ENCODE measurements at regions of chr2 and their contacts with region 1.

Region 1: DNA sequence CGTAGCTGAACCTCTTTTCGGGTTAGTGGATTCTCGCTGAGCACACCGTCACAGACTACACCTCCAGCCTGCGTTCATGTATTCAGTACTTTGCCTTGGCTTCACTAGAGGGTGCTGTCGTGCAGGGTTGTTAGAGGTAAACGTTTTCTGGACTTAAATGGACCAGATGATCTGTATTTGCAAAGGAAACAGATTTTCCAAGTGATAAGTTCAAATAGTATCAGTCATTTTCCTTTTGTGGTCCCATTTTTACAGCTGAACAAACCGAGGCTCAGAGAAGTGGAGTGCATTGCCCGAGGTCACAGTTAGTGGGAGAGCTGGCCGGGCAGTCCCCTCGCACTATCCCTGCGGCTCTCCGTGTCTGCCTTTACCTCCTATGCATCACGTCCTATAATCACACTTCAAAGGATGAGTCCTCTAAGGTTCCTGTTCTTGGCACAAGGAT is 125.9 kb downstream of the MAP4K4 start:
- DNase-seq: peak in 1 of 2 donors; percentile 76
- ATAC-seq: peak; percentile 27 to 76 (median 61)
- H3K4me3 ChIP-seq: no peak overlapping the region
- H3K27ac ChIP-seq: no peak overlapping the region
- H3K4me1 ChIP-seq: peaks cover 19 to 89% (median 71%) of the 10 kb centered on the region in 9 donors
- H3K27me3 ChIP-seq: no peaks in the 10 kb centered on the region
- CTCF ChIP-seq: peak; percentile 33 to 77 (median 71)

Region 2: DNA sequence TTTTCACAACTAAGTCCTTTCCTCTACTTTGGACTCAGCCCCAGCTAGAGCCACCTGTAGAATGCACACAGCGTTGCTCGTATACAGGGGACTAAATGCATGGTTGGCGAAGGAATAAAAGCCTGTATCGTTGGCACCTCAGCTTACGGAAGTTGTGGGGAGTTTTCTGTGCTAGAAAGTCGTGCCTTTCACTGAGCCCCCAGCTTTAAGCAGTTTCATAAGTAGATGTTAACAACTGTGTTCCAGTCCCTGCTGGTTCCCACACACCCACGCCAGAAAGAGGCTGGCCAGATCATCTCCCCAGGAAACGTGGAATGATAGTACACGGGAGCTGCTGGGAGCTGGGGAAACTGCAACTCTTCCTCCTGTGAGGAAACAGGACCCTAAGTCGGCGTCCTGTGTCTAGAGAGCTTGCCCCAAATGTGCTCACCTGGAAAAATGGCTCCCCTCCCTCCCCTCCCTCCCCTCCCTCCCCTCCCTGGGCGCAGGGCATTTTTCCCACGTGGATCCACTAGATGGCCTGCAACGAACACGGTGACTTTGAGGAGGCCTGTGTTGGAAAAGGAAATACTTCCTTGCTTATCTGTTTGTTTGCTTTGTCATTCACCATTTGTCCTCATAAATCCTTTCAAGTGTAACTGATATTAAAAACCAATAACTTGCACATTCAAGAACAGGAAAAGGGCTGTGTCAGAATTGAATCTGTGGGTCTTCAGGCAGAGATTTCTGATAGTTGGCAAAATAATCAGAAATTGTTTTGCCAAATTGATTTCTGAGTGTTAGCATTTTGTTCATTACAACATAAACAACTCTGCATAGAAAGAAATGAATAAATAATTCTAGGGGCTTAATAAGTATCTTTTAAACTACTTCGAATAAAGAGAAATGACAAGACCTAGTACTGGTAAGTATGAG is 304.5 kb before region 1 on chr2:
- intact Hi-C with region 1: loop called in 2 of 10 experiments (anchors 2 to 5 kb)
- DNase-seq: peak; percentile 39 to 66
- ATAC-seq: peak; percentile 68 to 83 (median 79)
- H3K4me3 ChIP-seq: peak overlapping the region in 2 of 10 donors; percentile 21 to 24
- H3K27ac ChIP-seq: peak overlapping the region in 6 of 10 donors; percentile 5 to 64 (median 30)
- H3K4me1 ChIP-seq: peaks cover 0 to 55% (median 30%) of the 10 kb centered on the region in 9 donors
- H3K27me3 ChIP-seq: peaks cover 0 to 22% (median 0%) of the 10 kb centered on the region in 7 donors
- CTCF ChIP-seq: peak in 8 of 9 donors; percentile 22 to 71 (median 50)

Region 3: DNA sequence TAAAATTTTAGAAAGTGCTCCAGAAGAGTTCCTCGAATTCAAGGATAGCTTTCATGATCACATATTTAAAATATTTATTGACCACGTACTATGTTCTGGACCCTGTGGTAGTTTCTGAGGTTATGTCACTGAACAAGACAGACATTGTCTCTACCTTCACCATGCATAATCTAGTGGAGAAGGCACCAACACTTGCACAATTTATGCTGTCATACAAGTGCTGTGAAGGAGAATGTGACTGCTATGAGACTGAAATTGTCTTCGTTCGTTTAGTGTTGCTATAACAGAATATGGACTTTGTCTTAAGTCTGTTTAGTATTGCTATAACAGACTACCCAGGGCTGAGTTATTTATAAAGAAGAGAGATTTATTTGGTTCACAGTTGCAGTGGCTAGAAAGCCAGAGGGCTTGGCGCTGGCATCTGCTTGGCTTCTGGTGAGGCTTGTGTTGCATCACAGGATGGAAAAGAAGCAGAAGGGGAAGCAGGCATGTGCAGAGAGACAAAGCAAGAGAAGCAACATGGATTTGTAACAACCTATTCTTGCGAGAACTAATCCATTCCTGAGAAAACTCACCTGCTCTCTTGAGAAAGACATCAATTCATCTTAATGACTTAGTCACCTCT is 298.5 kb before region 1 on chr2:
- intact Hi-C with region 1: loop called in 1 of 10 experiments (anchors 5 kb)
- DNase-seq: peak in 1 of 2 donors; percentile 23
- ATAC-seq: peak in 6 of 8 donors; percentile 46 to 90 (median 66)
- H3K4me3 ChIP-seq: no peak overlapping the region
- H3K27ac ChIP-seq: peak overlapping the region in 1 of 10 donors; percentile 29
- H3K4me1 ChIP-seq: peaks cover 0 to 13% (median 7%) of the 10 kb centered on the region in 9 donors
- H3K27me3 ChIP-seq: peaks cover 0 to 38% (median 0%) of the 10 kb centered on the region in 7 donors
- CTCF ChIP-seq: peak in 1 of 9 donors; percentile 8

Region 4: GRCh38 chr2:101759162-101759561 is 64.2 kb before region 1 on chr2:
- intact Hi-C with region 1: loop called in 2 of 10 experiments (anchors 2 to 10 kb)
- DNase-seq: peak in 1 of 2 donors; percentile 54
- ATAC-seq: peak in 7 of 8 donors; percentile 30 to 71 (median 53)
- H3K4me3 ChIP-seq: no peak overlapping the region
- H3K27ac ChIP-seq: peak overlapping the region in 5 of 10 donors; percentile 27 to 65 (median 49)
- H3K4me1 ChIP-seq: peaks cover 27 to 83% (median 75%) of the 10 kb centered on the region in 9 donors
- H3K27me3 ChIP-seq: no peaks in the 10 kb centered on the region
- CTCF ChIP-seq: no peak

Region 5: DNA sequence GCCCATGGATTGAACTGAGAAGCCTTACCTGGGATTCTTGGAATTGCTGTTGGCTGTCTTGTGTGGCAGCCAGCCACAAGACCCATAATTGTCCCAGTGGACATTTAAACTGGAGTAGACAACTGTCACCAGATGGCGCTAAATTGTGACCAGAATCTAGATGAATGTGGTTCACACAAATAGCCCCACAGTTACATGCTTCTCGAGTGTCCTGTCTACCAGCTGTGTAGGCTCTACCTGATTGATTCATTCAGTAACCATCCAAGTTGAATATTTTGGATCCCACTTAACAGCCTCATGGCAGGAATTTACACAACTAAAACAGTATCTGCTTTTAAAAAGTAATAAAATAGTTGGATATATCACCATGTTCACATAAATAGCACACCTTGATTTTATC is 52.6 kb before region 1 on chr2:
- intact Hi-C with region 1: loop called in 5 of 10 experiments (anchors 5 to 10 kb)
- DNase-seq: no peak
- ATAC-seq: peak in 3 of 8 donors; percentile 33 to 43 (median 38)
- H3K4me3 ChIP-seq: no peak overlapping the region
- H3K27ac ChIP-seq: peak overlapping the region in 5 of 10 donors; percentile 5 to 47 (median 22)
- H3K4me1 ChIP-seq: peaks cover 24 to 99% (median 92%) of the 10 kb centered on the region in 9 donors
- H3K27me3 ChIP-seq: no peaks in the 10 kb centered on the region
- CTCF ChIP-seq: peak in 6 of 9 donors; percentile 40 to 60 (median 46)

Region 6: DNA sequence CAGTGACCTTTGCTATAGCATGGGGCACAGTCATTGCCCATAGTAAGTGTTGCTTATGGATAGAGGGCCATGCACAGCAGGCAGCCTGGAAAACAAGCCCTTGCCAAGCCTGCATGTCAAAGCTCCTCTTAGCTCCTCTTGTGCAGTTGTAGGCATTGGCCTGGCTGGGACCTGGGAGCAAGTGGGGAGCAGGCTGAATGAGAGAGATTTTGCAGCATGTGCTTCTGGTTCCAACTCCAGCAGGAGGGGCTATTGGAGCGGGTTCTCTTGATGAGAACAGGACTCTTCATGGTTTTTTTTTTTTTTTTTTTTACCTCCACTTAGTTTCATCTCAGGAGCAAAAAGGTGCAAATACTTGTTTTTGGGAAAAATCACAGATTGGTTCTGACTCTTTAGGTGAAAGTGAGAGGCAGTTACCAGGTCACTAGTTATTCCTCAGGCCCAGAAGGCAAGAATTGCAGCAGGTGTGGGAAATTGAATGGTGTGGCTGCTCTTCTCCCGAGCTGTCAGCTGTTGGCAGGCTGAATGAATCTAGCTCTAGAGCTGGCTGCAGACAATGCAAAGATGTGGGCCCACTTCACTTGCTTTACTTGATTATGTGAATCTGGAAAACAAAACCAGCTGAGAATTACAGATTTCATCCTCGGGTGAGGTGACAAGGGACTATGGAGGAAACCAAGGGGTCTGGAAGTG is 29.9 kb before region 1 on chr2:
- intact Hi-C with region 1: loop called in 2 of 10 experiments (anchors 5 kb)
- DNase-seq: peak in 1 of 2 donors; percentile 48
- ATAC-seq: peak in 5 of 8 donors; percentile 31 to 57 (median 41)
- H3K4me3 ChIP-seq: no peak overlapping the region
- H3K27ac ChIP-seq: peak overlapping the region in 4 of 10 donors; percentile 7 to 58 (median 26)
- H3K4me1 ChIP-seq: peaks cover 5 to 100% (median 77%) of the 10 kb centered on the region in 9 donors
- H3K27me3 ChIP-seq: no peaks in the 10 kb centered on the region
- CTCF ChIP-seq: peak in 7 of 9 donors; percentile 19 to 58 (median 31)